Activated CD4-positive, alpha-beta memory T cell treated with anti-CD3 and anti-CD28 coated beads, Interleukin-2, amount 10 ng/mL, durations not matched to agents 7 days and 5 days (primary cell): ENCODE measurements at regions of chr16 and their contacts with region 1.

Region 1: GRCh38 chr16:70789226-70789926 is 11.6 kb downstream of the VAC14 start:
- DNase-seq: no peak
- H3K4me3 Mint-ChIP-seq: no peak overlapping the region
- H3K27ac Mint-ChIP-seq: no peak overlapping the region
- H3K4me1 Mint-ChIP-seq: no peaks in the 10 kb centered on the region
- H3K27me3 Mint-ChIP-seq: no peaks in the 10 kb centered on the region

Region 2: GRCh38 chr16:70778901-70779309 is 10.5 kb before region 1 on chr16:
- CTCF ChIA-PET with region 1: no interaction called
- POLR2A ChIA-PET with region 1: no interaction called
- DNase-seq: no peak
- H3K4me3 Mint-ChIP-seq: no peak overlapping the region
- H3K27ac Mint-ChIP-seq: peak overlapping the region; percentile 7
- H3K4me1 Mint-ChIP-seq: no peaks in the 10 kb centered on the region
- H3K27me3 Mint-ChIP-seq: no peaks in the 10 kb centered on the region

Region 3: GRCh38 chr16:70800781-70801530 is 11.6 kb after region 1 on chr16 and contains the start of gene VAC14:
- CTCF ChIA-PET with region 1: no interaction called
- POLR2A ChIA-PET with region 1: interaction called, 10 read pairs
- DNase-seq: peak; percentile 97
- H3K4me3 Mint-ChIP-seq: peak within 1 kb of the TSS; percentile 95
- H3K27ac Mint-ChIP-seq: peak within 1 kb of the TSS; percentile 83
- H3K4me1 Mint-ChIP-seq: peaks cover 50% of the 10 kb centered on the region
- H3K27me3 Mint-ChIP-seq: no peaks in the 10 kb centered on the region
- total RNA-seq, gene VAC14: 26.7 to 28.0 TPM